HCT116 (cell line): ENCODE measurements at regions of chr14 and their contacts with region 1.

Region 1: GRCh38 chr14:54106661-54107377 is 150.2 kb upstream of the BMP4 start:
- DNase-seq: no peak
- ATAC-seq: peak; percentile 57
- H3K4me3 ChIP-seq: peak overlapping the region in 1 of 2 experiments; percentile 28; a peak in 2 of 4 replicates
- H3K27ac ChIP-seq: peak overlapping the region; percentile 84
- H3K4me1 ChIP-seq: peaks cover 64 to 71% of the 10 kb centered on the region in 2 experiments
- H3K27me3 ChIP-seq: no peaks in the 10 kb centered on the region
- CTCF ChIP-seq: no peak
- POLR2A ChIP-seq: no peak
- RAD21 ChIP-seq: no peak

Region 2: GRCh38 chr14:54169254-54169924 is 62.6 kb after region 1 on chr14:
- CTCF ChIA-PET with region 1: no interaction called
- POLR2A ChIA-PET with region 1: no interaction called
- RAD21 ChIA-PET with region 1: no interaction called
- intact Hi-C with region 1: loop called (anchors 2 kb)
- DNase-seq: peak; percentile 71
- ATAC-seq: peak; percentile 84
- H3K4me3 ChIP-seq: no peak overlapping the region
- H3K27ac ChIP-seq: peak overlapping the region; percentile 73
- H3K4me1 ChIP-seq: peaks cover 36 to 38% of the 10 kb centered on the region in 2 experiments
- H3K27me3 ChIP-seq: no peaks in the 10 kb centered on the region
- CTCF ChIP-seq: no peak
- POLR2A ChIP-seq: no peak
- RAD21 ChIP-seq: peak; percentile 48